ENCODE measurements at regions of chr16 and their contacts with region 1.

Region 1: GRCh38 chr16:46689365-46690280 is at the start of gene ORC6:
- DNase-seq: peak; percentile 97 to 100 (median 99)

Region 2: GRCh38 chr16:46801428-46802049 is 111.9 kb after region 1 on chr16:
- intact Hi-C with region 1: loop called (anchors 10 kb)
- DNase-seq: no peak

Region 3: GRCh38 chr16:46830902-46831647 is 141.5 kb after region 1 on chr16 and contains the start of gene C16orf87:
- intact Hi-C with region 1: loop called (anchors 2 kb)
- DNase-seq: peak; percentile 83 to 99 (median 96)